ENCODE measurements at regions of chr3 and their contacts with region 1.

Region 1: GRCh38 chr3:183099026-183099837 is at the start of gene MCCC1:
- DNase-seq: peak; percentile 96 to 99 (median 97)
- H3K4me3 ChIP-seq: peak within 1 kb of the TSS; percentile 85 to 96
- H3K4me3 Mint-ChIP-seq: peak within 1 kb of the TSS; percentile 96 to 99 (median 97)
- H3K27ac ChIP-seq: peak within 1 kb of the TSS; percentile 81
- H3K27ac Mint-ChIP-seq: peak within 1 kb of the TSS; percentile 97 to 98 (median 97)
- H3K4me1 ChIP-seq: peaks cover 22% of the 10 kb centered on the region
- H3K4me1 Mint-ChIP-seq: peaks cover 17 to 42% (median 30%) of the 10 kb centered on the region in 4 donors
- H3K27me3 ChIP-seq: no peaks in the 10 kb centered on the region
- H3K27me3 Mint-ChIP-seq: no peaks in the 10 kb centered on the region
- total RNA-seq, gene MCCC1: 27.0 to 29.9 TPM

Region 2: DNA sequence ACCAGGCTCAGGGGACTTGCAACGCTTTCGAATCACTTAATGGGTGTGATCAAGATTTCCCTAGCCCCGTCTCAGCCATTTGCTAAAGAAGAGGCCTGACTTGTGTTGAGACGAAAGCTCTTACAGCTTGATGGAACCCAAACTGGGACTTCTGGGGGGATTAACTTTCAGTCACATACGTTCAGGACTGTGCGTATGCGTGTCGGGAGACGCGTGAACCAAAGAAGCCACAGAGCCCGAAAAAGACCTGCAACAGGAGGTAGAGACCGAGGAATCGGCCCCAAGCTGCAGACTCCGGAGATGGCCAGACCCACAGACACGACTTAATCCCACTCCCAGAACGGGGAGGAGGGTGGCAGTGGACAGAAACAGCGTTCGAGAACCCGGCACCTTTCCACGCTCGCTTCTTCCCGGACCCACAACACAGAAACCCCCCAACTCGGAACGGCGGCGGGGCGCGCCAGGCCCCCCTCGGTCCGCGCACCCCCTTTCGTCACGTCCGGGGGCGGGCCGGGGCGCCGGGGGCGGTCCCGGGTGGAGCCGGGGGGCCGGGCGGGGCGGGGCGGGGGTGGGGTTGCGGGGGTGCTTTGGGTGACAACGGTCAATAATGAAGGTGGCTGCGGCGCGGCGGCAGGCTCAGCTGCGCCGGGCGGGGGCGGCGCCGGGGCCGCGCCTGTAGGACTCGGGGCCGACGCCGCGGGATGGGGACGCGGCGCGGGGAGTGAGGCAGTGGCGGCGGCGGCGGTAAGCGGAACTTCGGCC is 306.1 kb before region 1 on chr3 and contains the start of gene ATP11B:
- CTCF ChIA-PET with region 1: no interaction called
- POLR2A ChIA-PET with region 1: no interaction called
- intact Hi-C with region 1: loop called (anchors 2 kb)
- DNase-seq: peak; percentile 76 to 86 (median 80)
- H3K4me3 ChIP-seq: peak within 1 kb of the TSS; percentile 97 to 98
- H3K4me3 Mint-ChIP-seq: peak within 1 kb of the TSS; percentile 99 to 100 (median 100)
- H3K27ac ChIP-seq: peak within 1 kb of the TSS; percentile 95
- H3K27ac Mint-ChIP-seq: peak within 1 kb of the TSS; percentile 99 to 100 (median 100)
- H3K4me1 ChIP-seq: peaks cover 25% of the 10 kb centered on the region
- H3K4me1 Mint-ChIP-seq: peaks cover 23 to 49% (median 27%) of the 10 kb centered on the region in 4 donors
- H3K27me3 ChIP-seq: no peaks in the 10 kb centered on the region
- H3K27me3 Mint-ChIP-seq: peaks cover 1 to 3% of the 10 kb centered on the region in 2 donors
- total RNA-seq, gene ATP11B: 119 to 130 TPM

Region 3: DNA sequence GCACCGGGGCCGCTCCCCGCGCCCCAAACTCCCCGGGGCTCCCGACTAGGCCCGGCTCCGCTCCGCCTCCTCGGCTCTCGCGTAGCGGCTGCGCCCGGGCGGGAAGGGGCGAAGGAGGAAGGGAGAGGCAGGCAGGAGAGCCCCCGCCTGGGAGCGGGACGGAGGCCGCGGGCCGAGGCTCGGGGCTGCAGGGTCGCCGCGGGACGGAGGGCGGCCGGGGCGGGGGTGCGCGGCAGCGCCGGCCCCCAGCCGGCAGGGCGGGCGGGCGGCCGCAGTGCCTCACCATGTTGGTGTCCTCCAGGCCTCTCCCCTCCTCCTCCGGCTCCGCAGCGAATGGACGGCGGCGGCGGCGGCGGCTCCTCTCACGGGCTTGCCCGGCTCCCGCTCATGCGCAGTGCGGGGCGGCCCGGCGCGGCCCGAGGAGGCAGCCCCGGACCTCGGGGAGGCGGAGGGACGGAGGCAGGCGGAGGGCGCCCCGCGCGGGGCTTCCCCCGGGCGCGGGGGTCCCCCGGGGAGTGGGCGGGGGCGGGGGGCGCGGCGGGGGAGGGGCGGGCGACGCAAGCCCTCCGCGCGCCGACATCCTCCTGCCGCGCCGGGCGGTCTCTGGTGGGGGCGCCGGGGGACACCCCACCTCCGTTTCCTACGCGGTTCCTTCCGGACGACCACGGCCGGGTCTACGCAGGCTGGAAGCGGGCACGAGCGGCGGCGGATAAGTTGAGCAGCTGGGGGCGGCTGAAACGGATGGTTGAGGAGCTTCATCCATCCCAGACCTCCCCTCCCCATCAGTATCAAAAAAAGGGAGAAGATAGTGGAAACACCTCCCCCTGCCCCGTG is 118.8 kb before region 1 on chr3 and contains the start of gene DCUN1D1:
- CTCF ChIA-PET with region 1: no interaction called
- POLR2A ChIA-PET with region 1: no interaction called
- intact Hi-C with region 1: loop called (anchors 5 kb)
- DNase-seq: peak; percentile 87 to 90 (median 89)
- H3K4me3 ChIP-seq: peak within 1 kb of the TSS; percentile 66 to 79
- H3K4me3 Mint-ChIP-seq: peak within 1 kb of the TSS; percentile 89 to 95 (median 92)
- H3K27ac ChIP-seq: peak within 1 kb of the TSS; percentile 75
- H3K27ac Mint-ChIP-seq: peak within 1 kb of the TSS; percentile 83 to 96 (median 88)
- H3K4me1 ChIP-seq: peaks cover 32% of the 10 kb centered on the region
- H3K4me1 Mint-ChIP-seq: peaks cover 24 to 43% (median 34%) of the 10 kb centered on the region in 4 donors
- H3K27me3 ChIP-seq: no peaks in the 10 kb centered on the region
- H3K27me3 Mint-ChIP-seq: no peaks in the 10 kb centered on the region
- total RNA-seq, gene DCUN1D1: 34.4 to 36.4 TPM

Region 4: DNA sequence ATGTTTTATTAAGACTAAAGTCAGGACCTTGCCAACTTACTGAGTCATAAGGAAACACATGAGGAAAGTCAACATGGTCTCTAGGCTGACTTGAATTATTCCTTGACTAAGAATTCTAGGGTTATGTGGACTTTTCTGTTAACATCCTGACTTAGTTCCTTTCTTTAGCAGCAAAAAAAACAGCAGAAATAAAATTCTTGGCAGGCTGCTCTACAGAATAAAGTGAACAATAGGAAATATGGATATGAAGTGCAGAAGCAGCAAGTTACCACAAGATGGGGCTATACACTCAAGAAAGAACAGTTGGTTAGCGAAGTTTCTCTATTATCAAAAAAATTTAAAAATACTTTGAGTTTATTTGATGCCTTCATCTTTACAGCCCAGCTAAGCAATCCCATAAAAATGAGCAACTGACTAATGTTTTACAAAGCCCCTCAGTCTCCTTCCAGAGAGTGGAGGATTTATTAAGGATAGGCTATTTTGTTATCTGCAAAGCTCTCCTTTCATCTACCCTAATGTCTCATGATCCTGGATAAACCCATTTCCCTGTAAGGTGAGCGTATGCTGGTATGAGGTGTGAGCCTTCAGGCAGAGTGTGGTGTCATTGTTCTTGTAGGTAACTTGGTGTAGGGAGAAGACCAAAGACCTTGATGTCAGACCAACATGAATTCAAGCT is 23.2 kb after region 1 on chr3:
- CTCF ChIA-PET with region 1: interaction called, 13 read pairs
- POLR2A ChIA-PET with region 1: no interaction called
- intact Hi-C with region 1: no loop called
- DNase-seq: peak in 4 of 5 donors; percentile 53 to 55 (median 54)
- H3K4me3 ChIP-seq: no peak overlapping the region
- H3K4me3 Mint-ChIP-seq: no peak overlapping the region
- H3K27ac ChIP-seq: no peak overlapping the region
- H3K27ac Mint-ChIP-seq: no peak overlapping the region
- H3K4me1 ChIP-seq: no peaks in the 10 kb centered on the region
- H3K4me1 Mint-ChIP-seq: no peaks in the 10 kb centered on the region
- H3K27me3 ChIP-seq: no peaks in the 10 kb centered on the region
- H3K27me3 Mint-ChIP-seq: peaks cover 0 to 2% of the 10 kb centered on the region in 2 donors

Region 5: GRCh38 chr3:183285828-183286457 is 186.7 kb after region 1 on chr3:
- CTCF ChIA-PET with region 1: no interaction called
- POLR2A ChIA-PET with region 1: no interaction called
- intact Hi-C with region 1: loop called (anchors 2 kb)
- DNase-seq: peak; percentile 85 to 99 (median 90)
- H3K4me3 ChIP-seq: peak overlapping the region in 1 of 2 donors; percentile 13
- H3K4me3 Mint-ChIP-seq: peak overlapping the region; percentile 56 to 82 (median 76)
- H3K27ac ChIP-seq: peak overlapping the region; percentile 73
- H3K27ac Mint-ChIP-seq: peak overlapping the region; percentile 95 to 98 (median 96)
- H3K4me1 ChIP-seq: peaks cover 20% of the 10 kb centered on the region
- H3K4me1 Mint-ChIP-seq: peaks cover 14 to 32% (median 21%) of the 10 kb centered on the region in 4 donors
- H3K27me3 ChIP-seq: no peaks in the 10 kb centered on the region
- H3K27me3 Mint-ChIP-seq: no peaks in the 10 kb centered on the region

Measured in CD4-positive, alpha-beta memory T cell (primary cell).